Right cardiac atrium (tissue), 5 donors: ENCODE measurements at regions of chr5 and their contacts with region 1.

Region 1: GRCh38 chr5:1652596-1653345 is 129.0 kb upstream of the LPCAT1 start:
- DNase-seq: no peak
- ATAC-seq: no peak
- H3K4me3 ChIP-seq: no peak overlapping the region
- H3K27ac ChIP-seq: no peak overlapping the region
- H3K4me1 ChIP-seq: peaks cover 2% of the 10 kb centered on the region
- H3K27me3 ChIP-seq: no peaks in the 10 kb centered on the region

Region 2: GRCh38 chr5:1167728-1168709 is 484.8 kb before region 1 on chr5:
- intact Hi-C with region 1: loop called in 1 of 4 experiments (anchors 10 kb)
- DNase-seq: peak; percentile 70 to 86 (median 76)
- ATAC-seq: peak; percentile 66 to 78
- H3K4me3 ChIP-seq: no peak overlapping the region
- H3K27ac ChIP-seq: no peak overlapping the region
- H3K4me1 ChIP-seq: no peaks in the 10 kb centered on the region
- H3K27me3 ChIP-seq: no peaks in the 10 kb centered on the region